ENCODE measurements at regions of chr15 and their contacts with region 1.

Region 1: DNA sequence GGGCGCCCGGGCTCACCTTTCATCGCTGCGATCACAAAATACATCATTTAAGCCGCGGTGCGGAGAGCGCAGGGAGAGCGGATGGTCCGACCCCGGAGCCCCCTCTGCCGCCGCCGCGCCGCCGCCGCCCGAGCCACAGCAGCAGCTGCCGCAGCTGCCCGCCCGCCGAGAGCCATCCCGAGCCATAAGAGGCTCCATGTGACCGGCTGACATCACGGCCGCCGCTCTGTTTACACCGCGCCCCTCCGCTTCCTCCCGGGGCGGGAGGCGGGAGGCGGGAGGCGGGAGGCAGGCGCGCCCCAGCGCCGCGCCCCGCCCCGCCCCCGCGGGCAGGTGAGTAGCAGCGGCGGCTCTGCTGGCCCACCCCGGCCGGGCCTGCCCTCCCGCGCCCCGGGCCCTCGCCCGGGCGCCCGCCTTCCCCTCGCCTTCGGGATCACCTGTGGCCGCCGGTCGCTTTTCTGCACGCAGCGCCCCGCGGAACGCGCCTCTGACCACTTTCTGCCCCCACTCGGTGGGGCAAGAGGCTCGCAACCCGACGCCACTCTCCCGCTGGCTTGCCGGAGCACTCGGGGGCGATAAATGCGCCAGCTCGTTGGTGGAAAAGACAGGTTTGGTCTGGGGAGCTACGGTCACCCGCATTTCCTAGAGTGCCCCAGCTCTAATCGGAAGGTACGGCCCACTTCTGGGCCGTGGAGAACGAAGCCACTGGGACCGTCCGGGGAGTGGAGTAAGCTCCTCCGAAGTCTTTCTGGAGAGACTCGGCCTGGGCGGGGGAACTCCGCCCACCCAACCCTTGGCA is 113.6 kb upstream of the ICE2 start:
- DNase-seq: peak; percentile 85 to 89 (median 86)
- H3K4me3 ChIP-seq: peak overlapping the region; percentile 68
- H3K27ac ChIP-seq: peak overlapping the region; percentile 81 to 94
- H3K4me1 ChIP-seq: no peaks in the 10 kb centered on the region
- H3K27me3 ChIP-seq: no peaks in the 10 kb centered on the region
- CTCF ChIP-seq: peak in 2 of 3 donors; percentile 19 to 34
- EP300 ChIP-seq: no peak
- POLR2A ChIP-seq: peak; percentile 57

Region 2: GRCh38 chr15:60713119-60714084 is 120.8 kb after region 1 on chr15:
- intact Hi-C with region 1: loop called in 1 of 4 experiments (anchors 10 kb)
- DNase-seq: peak in 2 of 5 donors; percentile 17 to 36
- H3K4me3 ChIP-seq: no peak overlapping the region
- H3K27ac ChIP-seq: peak overlapping the region in 1 of 2 donors; percentile 41
- H3K4me1 ChIP-seq: peaks cover 3% of the 10 kb centered on the region
- H3K27me3 ChIP-seq: no peaks in the 10 kb centered on the region
- CTCF ChIP-seq: no peak
- EP300 ChIP-seq: no peak
- POLR2A ChIP-seq: no peak

Region 3: GRCh38 chr15:60751985-60752952 is 159.7 kb after region 1 on chr15:
- intact Hi-C with region 1: loop called in 1 of 4 experiments (anchors 5 kb)
- DNase-seq: peak; percentile 52 to 78 (median 66)
- H3K4me3 ChIP-seq: no peak overlapping the region
- H3K27ac ChIP-seq: peak overlapping the region in 1 of 2 donors; percentile 45
- H3K4me1 ChIP-seq: peaks cover 9% of the 10 kb centered on the region
- H3K27me3 ChIP-seq: no peaks in the 10 kb centered on the region
- CTCF ChIP-seq: no peak
- EP300 ChIP-seq: no peak
- POLR2A ChIP-seq: no peak

Region 4: DNA sequence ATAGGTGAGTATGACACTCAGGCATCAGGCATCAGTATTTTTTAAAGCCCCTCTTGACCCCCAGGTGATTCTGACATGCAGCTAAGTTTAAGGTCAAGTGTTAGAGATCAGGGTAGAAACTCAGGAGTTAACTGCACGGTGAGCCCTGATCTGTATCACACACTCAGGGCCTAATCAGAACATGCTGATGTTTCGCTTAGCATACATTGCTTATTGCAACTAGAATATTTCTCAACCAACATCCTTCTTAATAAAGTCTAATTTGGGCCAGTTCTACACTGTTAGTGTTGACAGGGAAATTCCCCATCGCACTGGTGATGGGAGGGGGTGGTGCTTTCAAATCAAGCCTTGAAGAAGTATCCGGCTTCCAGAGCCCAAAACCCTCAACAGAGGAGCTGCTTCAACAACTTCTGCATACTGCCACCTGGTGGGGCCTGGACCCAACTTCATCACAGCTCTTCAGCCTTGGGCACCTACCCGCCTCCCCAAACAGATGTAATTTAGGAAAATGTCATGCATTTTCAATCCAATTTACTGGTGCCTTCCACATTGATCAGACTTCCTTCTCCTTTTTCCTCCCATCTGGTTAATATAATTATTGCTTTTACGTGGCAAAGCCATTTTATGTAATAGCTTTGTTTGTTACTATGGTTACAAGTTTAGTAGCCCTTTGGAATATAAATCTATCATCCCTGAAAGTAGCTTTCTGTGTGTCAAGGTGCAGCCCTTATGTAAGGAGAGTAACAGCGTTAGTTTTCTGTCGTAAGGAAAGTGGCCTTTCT is 324.3 kb after region 1 on chr15:
- intact Hi-C with region 1: loop called in 3 of 4 experiments (anchors 2 to 5 kb)
- DNase-seq: peak; percentile 85 to 94 (median 88)
- H3K4me3 ChIP-seq: peak overlapping the region; percentile 23
- H3K27ac ChIP-seq: peak overlapping the region; percentile 38 to 84
- H3K4me1 ChIP-seq: peaks cover 9% of the 10 kb centered on the region
- H3K27me3 ChIP-seq: no peaks in the 10 kb centered on the region
- CTCF ChIP-seq: peak in 2 of 3 donors; percentile 74 to 79
- EP300 ChIP-seq: no peak
- POLR2A ChIP-seq: no peak

Region 5: GRCh38 chr15:61044723-61045122 is 452.2 kb after region 1 on chr15:
- intact Hi-C with region 1: loop called in 1 of 4 experiments (anchors 2 kb)
- DNase-seq: no peak
- H3K4me3 ChIP-seq: no peak overlapping the region
- H3K27ac ChIP-seq: no peak overlapping the region
- H3K4me1 ChIP-seq: no peaks in the 10 kb centered on the region
- H3K27me3 ChIP-seq: no peaks in the 10 kb centered on the region
- CTCF ChIP-seq: no peak
- EP300 ChIP-seq: no peak
- POLR2A ChIP-seq: no peak

Region 6: GRCh38 chr15:61051569-61052031 is 459.0 kb after region 1 on chr15:
- intact Hi-C with region 1: loop called in 1 of 4 experiments (anchors 5 kb)
- DNase-seq: peak; percentile 51 to 63 (median 56)
- H3K4me3 ChIP-seq: no peak overlapping the region
- H3K27ac ChIP-seq: no peak overlapping the region
- H3K4me1 ChIP-seq: peaks cover 4% of the 10 kb centered on the region
- H3K27me3 ChIP-seq: no peaks in the 10 kb centered on the region
- CTCF ChIP-seq: peak; percentile 35 to 54 (median 53)
- EP300 ChIP-seq: no peak
- POLR2A ChIP-seq: no peak